Panc1 (cell line): ENCODE measurements at regions of chr7 and their contacts with region 1.

Region 1: GRCh38 chr7:79298145-79298760 is 155.2 kb downstream of the MAGI2 start:
- DNase-seq: peak; percentile 50
- ATAC-seq: no peak
- H3K4me3 ChIP-seq: no peak overlapping the region
- H3K27ac ChIP-seq: peak overlapping the region; percentile 96
- H3K4me1 ChIP-seq: peaks cover 9% of the 10 kb centered on the region; the same call in 1 of the 2 replicates
- H3K27me3 ChIP-seq: no peaks in the 10 kb centered on the region
- CTCF ChIP-seq: peak; percentile 81; the same call in 1 of the 2 replicates

Region 2: GRCh38 chr7:79258826-79259225 is 39.4 kb before region 1 on chr7:
- CTCF ChIA-PET with region 1: no interaction called
- POLR2A ChIA-PET with region 1: no interaction called
- in situ Hi-C with region 1: no loop called
- intact Hi-C with region 1: no loop called
- DNase-seq: no peak
- ATAC-seq: no peak
- H3K4me3 ChIP-seq: no peak overlapping the region
- H3K27ac ChIP-seq: no peak overlapping the region
- H3K4me1 ChIP-seq: no peaks in the 10 kb centered on the region
- H3K27me3 ChIP-seq: no peaks in the 10 kb centered on the region
- CTCF ChIP-seq: no peak

Region 3: DNA sequence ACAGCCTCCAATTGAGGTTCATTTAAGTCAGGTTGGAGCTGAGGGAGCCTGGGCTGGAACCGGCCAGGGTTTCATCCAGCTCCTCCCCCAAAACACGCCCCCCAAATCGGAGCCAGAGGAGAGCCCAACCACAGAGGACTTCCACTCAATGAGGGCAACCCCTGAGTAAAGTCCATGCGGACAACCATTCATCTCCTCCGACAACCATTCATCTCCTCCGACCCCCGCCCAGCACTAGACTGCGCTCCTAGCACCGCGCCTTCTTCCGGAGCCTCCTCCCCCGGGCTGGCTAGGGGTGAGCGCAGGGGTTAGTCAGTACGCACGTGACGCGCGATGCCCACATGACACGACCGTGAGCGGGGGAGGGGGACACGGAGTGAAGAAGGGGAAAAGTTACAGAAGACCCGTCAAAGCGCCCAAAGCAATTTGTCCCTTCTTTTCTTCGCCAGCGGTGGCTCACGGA is 153.8 kb after region 1 on chr7:
- CTCF ChIA-PET with region 1: interaction called, 5 read pairs
- POLR2A ChIA-PET with region 1: no interaction called
- in situ Hi-C with region 1: no loop called
- intact Hi-C with region 1: loop called (anchors 5 kb)
- DNase-seq: peak; percentile 83
- ATAC-seq: peak; percentile 88
- H3K4me3 ChIP-seq: peak overlapping the region; percentile 79 to 94
- H3K27ac ChIP-seq: peak overlapping the region; percentile 83
- H3K4me1 ChIP-seq: peaks cover 39% of the 10 kb centered on the region
- H3K27me3 ChIP-seq: no peaks in the 10 kb centered on the region
- CTCF ChIP-seq: no peak

Region 4: GRCh38 chr7:79741684-79742083 is 443.4 kb after region 1 on chr7:
- CTCF ChIA-PET with region 1: interaction called, 3 read pairs
- POLR2A ChIA-PET with region 1: no interaction called
- in situ Hi-C with region 1: no loop called
- intact Hi-C with region 1: loop called (anchors 10 kb)
- DNase-seq: no peak
- ATAC-seq: peak; percentile 69; the same call in 1 of the 2 replicates
- H3K4me3 ChIP-seq: no peak overlapping the region
- H3K27ac ChIP-seq: no peak overlapping the region
- H3K4me1 ChIP-seq: no peaks in the 10 kb centered on the region
- H3K27me3 ChIP-seq: no peaks in the 10 kb centered on the region
- CTCF ChIP-seq: peak; percentile 60; the same call in 1 of the 2 replicates

Region 5: DNA sequence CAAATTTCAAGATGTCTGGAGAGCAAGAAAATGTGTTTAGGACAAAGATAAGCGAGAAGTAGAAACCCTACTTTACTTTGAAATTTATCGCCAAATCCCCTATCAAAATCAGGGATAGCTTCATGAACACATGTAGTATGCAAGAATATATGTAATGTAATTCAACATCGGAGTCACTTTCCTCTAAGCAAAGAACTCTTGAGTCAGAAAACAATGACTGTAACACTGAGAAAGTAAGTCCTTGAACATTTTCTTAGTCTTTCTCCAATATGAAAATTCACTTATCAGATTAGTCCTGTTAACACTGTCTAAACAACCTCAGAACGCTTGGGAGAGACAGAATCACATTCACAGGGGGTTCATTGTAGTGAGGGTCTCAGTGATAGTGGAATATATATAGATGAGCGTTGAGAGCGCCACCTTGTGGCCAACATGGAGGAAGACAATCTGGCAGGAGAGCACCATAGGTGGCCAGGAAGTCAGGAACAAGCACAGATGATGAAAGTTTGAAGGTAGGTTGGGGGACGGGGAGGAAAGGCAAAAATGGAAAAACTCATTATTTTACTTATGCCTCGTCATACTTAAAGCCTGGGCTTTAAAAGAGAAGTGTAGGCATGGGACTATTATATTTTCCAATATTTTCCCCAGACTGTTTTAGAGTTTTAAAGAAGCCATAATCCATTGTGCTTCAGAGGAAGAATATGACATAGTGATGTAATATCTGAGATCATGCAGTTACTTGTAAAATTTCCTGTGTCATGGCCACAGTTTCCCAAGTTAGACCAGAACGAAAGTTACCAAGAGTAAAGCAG is 720.9 kb after region 1 on chr7:
- CTCF ChIA-PET with region 1: no interaction called
- POLR2A ChIA-PET with region 1: no interaction called
- in situ Hi-C with region 1: no loop called
- intact Hi-C with region 1: loop called (anchors 10 kb)
- DNase-seq: peak; percentile 56
- ATAC-seq: peak; percentile 95
- H3K4me3 ChIP-seq: no peak overlapping the region
- H3K27ac ChIP-seq: peak overlapping the region; percentile 45; the same call in 1 of the 2 replicates
- H3K4me1 ChIP-seq: no peaks in the 10 kb centered on the region
- H3K27me3 ChIP-seq: no peaks in the 10 kb centered on the region
- CTCF ChIP-seq: peak; percentile 92